ENCODE measurements at regions of chr5 and their contacts with region 1.

Region 1: GRCh38 chr5:75433814-75434506 is 77.5 kb downstream of the CERT1 start:
- DNase-seq: no peak
- ATAC-seq: no peak
- H3K4me3 ChIP-seq: no peak overlapping the region
- H3K27ac ChIP-seq: no peak overlapping the region
- H3K4me1 ChIP-seq: no peaks in the 10 kb centered on the region
- H3K27me3 ChIP-seq: no peaks in the 10 kb centered on the region
- CTCF ChIP-seq: no peak
- EP300 ChIP-seq: no peak
- POLR2A ChIP-seq: no peak
- RAD21 ChIP-seq: no peak

Region 2: DNA sequence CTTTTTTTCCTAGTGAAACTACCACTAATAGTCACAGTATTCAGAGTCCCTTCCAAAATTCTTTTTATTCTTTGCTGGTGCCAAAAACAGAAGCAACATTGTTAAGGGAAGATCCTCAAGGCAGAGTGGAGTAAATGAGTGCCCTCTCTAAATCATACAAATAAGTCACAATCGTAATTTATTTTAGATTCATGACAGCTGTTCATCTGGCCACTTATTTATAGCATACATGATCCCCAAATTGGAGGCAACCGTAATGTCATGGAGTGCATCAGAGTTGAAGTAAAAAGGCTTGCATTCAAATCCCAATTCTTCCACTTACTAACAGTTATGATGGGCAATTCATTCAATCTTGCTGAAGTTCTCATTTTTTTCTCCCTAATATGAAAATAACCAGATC is 111.2 kb after region 1 on chr5:
- CTCF ChIA-PET with region 1: no interaction called
- POLR2A ChIA-PET with region 1: no interaction called
- RAD21 ChIA-PET with region 1: no interaction called
- SMC1A ChIA-PET with region 1: no interaction called
- in situ Hi-C with region 1: no loop called
- intact Hi-C with region 1: no loop called
- DNase-seq: no peak
- ATAC-seq: no peak
- H3K4me3 ChIP-seq: no peak overlapping the region
- H3K27ac ChIP-seq: no peak overlapping the region
- H3K4me1 ChIP-seq: no peaks in the 10 kb centered on the region
- H3K27me3 ChIP-seq: no peaks in the 10 kb centered on the region
- CTCF ChIP-seq: no peak
- EP300 ChIP-seq: no peak
- POLR2A ChIP-seq: no peak
- RAD21 ChIP-seq: no peak

Region 3: GRCh38 chr5:75584641-75585040 is 150.7 kb after region 1 on chr5:
- CTCF ChIA-PET with region 1: no interaction called
- POLR2A ChIA-PET with region 1: no interaction called
- RAD21 ChIA-PET with region 1: no interaction called
- SMC1A ChIA-PET with region 1: interaction called, 3 read pairs
- in situ Hi-C with region 1: no loop called
- intact Hi-C with region 1: loop called (anchors 10 kb)
- DNase-seq: no peak
- ATAC-seq: no peak
- H3K4me3 ChIP-seq: no peak overlapping the region
- H3K27ac ChIP-seq: no peak overlapping the region
- H3K4me1 ChIP-seq: no peaks in the 10 kb centered on the region
- H3K27me3 ChIP-seq: no peaks in the 10 kb centered on the region
- CTCF ChIP-seq: 0 out of 6 replicates have a peak, but pooled peaks of 1 of the 3 experiments have one; percentile 9
- EP300 ChIP-seq: no peak
- POLR2A ChIP-seq: no peak
- RAD21 ChIP-seq: peak; percentile 22

Region 4: GRCh38 chr5:75663579-75664284 is 229.8 kb after region 1 on chr5:
- CTCF ChIA-PET with region 1: no interaction called
- POLR2A ChIA-PET with region 1: no interaction called
- RAD21 ChIA-PET with region 1: no interaction called
- SMC1A ChIA-PET with region 1: no interaction called
- in situ Hi-C with region 1: no loop called
- intact Hi-C with region 1: no loop called
- DNase-seq: no peak
- ATAC-seq: no peak
- H3K4me3 ChIP-seq: no peak overlapping the region
- H3K27ac ChIP-seq: no peak overlapping the region
- H3K4me1 ChIP-seq: peaks cover 16% of the 10 kb centered on the region
- H3K27me3 ChIP-seq: no peaks in the 10 kb centered on the region
- CTCF ChIP-seq: no peak
- EP300 ChIP-seq: no peak
- POLR2A ChIP-seq: no peak
- RAD21 ChIP-seq: no peak

Measured in GM12878 (cell line).